ENCODE measurements at regions of chr13 and their contacts with region 1.

Region 1: GRCh38 chr13:20141238-20142022 is 19.4 kb downstream of the GJA3 start:
- DNase-seq: peak; percentile 64 to 73
- ATAC-seq: peak; percentile 83 to 95 (median 92)
- H3K4me3 ChIP-seq: peak overlapping the region in 3 of 10 donors; percentile 7 to 13 (median 8)
- H3K27ac ChIP-seq: peak overlapping the region in 9 of 10 donors; percentile 51 to 88 (median 76)
- H3K4me1 ChIP-seq: peaks cover 4 to 54% (median 26%) of the 10 kb centered on the region in 9 donors
- H3K27me3 ChIP-seq: peaks cover 0 to 71% (median 42%) of the 10 kb centered on the region in 7 donors
- CTCF ChIP-seq: no peak

Region 2: DNA sequence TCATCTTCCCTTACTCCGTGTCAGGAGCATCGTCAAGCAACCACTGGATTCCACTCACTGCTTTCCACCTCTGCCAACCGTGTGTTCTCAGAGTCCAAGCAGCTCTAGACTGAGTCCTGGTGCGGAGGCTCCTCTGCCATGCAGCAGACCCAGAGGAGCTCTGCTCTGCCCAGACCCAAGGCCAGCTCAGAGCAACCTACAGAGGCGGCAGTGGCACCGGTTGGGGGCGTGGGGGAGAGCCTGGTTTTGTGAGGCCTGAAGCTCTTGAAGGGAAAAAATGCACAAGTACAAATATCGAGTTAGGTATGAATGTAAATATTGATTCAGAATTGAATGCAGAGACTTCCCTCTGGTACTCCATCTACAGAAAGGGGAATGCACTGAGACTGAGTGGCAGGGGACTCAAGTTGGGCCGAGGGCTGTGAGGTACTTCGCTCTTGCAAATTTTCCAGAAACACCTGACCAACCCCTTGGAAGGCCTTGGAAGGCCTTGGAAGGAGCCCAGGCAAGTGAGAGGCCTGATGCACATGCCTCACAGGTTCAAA is 27.3 kb before region 1 on chr13:
- intact Hi-C with region 1: loop called in 1 of 10 experiments (anchors 2 kb)
- DNase-seq: no peak
- ATAC-seq: no peak
- H3K4me3 ChIP-seq: no peak overlapping the region
- H3K27ac ChIP-seq: no peak overlapping the region
- H3K4me1 ChIP-seq: peaks cover 0 to 14% (median 3%) of the 10 kb centered on the region in 9 donors
- H3K27me3 ChIP-seq: peaks cover 0 to 4% (median 0%) of the 10 kb centered on the region in 7 donors
- CTCF ChIP-seq: no peak

Region 3: DNA sequence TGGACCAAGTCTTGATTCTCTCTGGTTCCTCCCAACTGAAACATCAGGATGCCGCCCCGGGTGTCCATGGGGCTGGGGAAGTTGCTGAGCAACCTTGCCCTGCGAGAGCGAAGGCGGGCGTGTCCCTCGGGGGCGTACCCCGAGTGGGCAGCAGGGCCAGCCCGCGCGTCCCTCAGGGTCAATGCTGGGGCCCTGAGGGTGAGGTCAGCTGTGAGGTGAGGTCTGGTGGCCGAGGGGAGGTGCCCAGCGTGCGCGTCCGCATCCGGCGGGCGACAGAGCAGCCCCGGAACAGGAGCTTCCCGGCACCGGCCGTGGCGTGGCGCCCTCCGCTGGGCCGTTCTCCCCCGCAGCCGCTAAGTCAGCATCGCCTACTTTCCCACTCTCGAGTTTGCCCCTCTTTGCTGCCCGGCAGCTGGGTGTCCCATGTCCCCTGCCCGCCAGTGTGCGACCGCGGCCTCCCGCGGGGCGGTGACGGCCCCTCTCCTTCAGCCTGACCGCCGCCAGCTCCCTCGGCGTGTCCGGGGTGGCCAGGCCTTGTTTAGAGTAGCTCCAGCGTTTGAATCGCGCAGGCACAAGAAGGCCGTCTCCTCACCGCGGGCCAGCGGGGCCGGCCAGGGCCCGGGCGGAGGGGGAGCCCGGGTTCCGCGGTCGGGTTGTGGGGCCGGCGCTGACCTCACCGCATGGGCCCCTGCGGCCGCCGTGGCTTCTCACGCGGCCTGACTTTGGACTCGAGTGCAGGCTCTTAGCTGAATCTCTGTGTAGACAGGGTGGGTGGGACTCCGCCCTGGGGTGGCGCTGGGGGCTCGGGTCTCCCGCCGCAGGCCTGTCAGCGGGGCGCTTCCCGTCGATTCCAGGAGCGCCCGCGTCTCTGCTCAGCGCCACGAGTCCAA is 13.6 kb before region 1 on chr13:
- intact Hi-C with region 1: loop called in 1 of 10 experiments (anchors 1 kb)
- DNase-seq: peak; percentile 69 to 78
- ATAC-seq: peak; percentile 82 to 88 (median 84)
- H3K4me3 ChIP-seq: peak overlapping the region; percentile 30 to 73 (median 64)
- H3K27ac ChIP-seq: peak overlapping the region; percentile 78 to 97 (median 94)
- H3K4me1 ChIP-seq: peaks cover 5 to 57% (median 35%) of the 10 kb centered on the region in 9 donors
- H3K27me3 ChIP-seq: peaks cover 0 to 42% (median 15%) of the 10 kb centered on the region in 7 donors
- CTCF ChIP-seq: peak; percentile 17 to 74 (median 43)

Region 4: GRCh38 chr13:20209948-20210347 is 68.5 kb after region 1 on chr13:
- intact Hi-C with region 1: no loop called
- DNase-seq: no peak
- ATAC-seq: no peak
- H3K4me3 ChIP-seq: no peak overlapping the region
- H3K27ac ChIP-seq: no peak overlapping the region
- H3K4me1 ChIP-seq: no peaks in the 10 kb centered on the region
- H3K27me3 ChIP-seq: peaks cover 0 to 28% (median 16%) of the 10 kb centered on the region in 7 donors
- CTCF ChIP-seq: no peak

Region 5: GRCh38 chr13:20231839-20232555 is 90.6 kb after region 1 on chr13 and contains the start of gene GJB6:
- intact Hi-C with region 1: no loop called
- DNase-seq: no peak
- ATAC-seq: peak in 2 of 8 donors; percentile 38 to 65
- H3K4me3 ChIP-seq: peak within 1 kb of the TSS in 9 of 10 donors; percentile 21 to 50 (median 37)
- H3K27ac ChIP-seq: no peak within 1 kb of the TSS
- H3K4me1 ChIP-seq: peaks cover 0 to 14% (median 8%) of the 10 kb centered on the region in 9 donors
- H3K27me3 ChIP-seq: peaks cover 13 to 75% (median 47%) of the 10 kb centered on the region in 7 donors
- CTCF ChIP-seq: peak in 1 of 9 donors; percentile 17
- total RNA-seq, gene GJB6: 0.61 TPM in 1 of 10 donors, not detected in the others

Measured in heart right ventricle (tissue), 16 donors.